Posterior cingulate gyrus (tissue), 11 donors: ENCODE measurements at regions of chr4 and their contacts with region 1.

Region 1: GRCh38 chr4:168923526-168924194 is 86.4 kb downstream of the CBR4 start:
- DNase-seq: peak in 5 of 10 donors; percentile 33 to 68 (median 35)

Region 2: DNA sequence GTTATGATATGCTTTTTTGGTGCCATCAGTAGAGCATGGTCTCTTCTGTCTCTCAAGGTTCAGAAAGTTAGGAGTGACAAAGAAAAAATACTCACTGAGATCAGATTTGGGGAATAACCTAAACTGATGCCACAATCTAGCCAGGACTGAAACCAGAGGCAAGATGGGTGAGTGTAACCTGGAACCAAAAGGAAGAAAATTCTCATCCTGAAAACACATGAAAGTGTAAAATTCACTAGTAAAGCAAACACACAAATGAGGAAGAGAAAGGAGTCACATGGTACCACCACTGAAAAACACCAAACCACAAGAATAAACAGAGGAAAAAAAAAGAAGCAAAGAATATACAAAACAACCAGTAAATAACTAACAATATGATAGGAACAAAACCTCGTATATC is 734.9 kb before region 1 on chr4:
- intact Hi-C with region 1: loop called (anchors 5 kb)
- DNase-seq: no peak

Region 3: DNA sequence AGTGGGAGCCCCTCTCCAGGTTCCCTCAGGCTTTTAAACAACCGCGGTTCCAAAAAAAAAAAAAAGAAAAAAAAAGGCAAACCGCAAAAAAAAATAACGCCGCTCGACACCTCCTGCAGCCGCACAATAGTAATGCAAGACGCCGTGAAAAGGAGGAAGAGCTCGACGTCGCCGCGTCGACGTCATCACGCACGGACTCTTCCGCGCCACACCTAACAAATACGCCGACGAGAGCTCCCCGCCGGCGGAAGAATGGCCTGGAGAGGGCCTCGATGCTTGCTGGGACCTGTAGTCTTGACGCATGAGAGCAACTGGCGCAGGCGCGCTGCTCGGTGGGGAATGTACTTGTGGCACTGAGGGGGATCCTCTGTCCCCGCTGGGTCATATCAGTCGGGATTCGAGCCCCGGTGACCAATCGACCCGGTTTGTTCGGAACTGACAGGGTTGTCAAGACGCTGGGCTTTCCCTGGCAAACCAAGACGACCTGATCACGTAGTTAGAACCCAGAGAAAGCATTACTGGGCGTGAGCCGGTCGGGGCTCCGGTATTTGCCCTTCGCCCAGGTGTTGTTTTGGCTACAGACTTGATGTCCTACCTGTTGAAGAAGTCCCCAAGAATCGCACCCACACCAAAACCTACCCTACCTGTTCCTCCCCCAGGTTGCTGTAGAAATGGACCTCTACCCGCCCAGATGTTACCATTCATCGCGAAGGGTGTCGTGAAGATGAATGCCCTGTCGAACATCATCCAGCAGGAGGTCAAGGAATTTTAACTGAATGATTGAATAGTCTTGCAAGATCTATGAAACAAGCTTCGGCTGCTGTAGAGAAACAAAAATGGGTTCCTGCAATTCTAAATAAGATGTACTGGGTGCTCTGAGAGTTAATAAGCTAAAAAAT is 86.7 kb after region 1 on chr4 and contains the start of gene CBR4:
- intact Hi-C with region 1: loop called (anchors 5 kb)
- DNase-seq: peak; percentile 96 to 100 (median 98)

Region 4: DNA sequence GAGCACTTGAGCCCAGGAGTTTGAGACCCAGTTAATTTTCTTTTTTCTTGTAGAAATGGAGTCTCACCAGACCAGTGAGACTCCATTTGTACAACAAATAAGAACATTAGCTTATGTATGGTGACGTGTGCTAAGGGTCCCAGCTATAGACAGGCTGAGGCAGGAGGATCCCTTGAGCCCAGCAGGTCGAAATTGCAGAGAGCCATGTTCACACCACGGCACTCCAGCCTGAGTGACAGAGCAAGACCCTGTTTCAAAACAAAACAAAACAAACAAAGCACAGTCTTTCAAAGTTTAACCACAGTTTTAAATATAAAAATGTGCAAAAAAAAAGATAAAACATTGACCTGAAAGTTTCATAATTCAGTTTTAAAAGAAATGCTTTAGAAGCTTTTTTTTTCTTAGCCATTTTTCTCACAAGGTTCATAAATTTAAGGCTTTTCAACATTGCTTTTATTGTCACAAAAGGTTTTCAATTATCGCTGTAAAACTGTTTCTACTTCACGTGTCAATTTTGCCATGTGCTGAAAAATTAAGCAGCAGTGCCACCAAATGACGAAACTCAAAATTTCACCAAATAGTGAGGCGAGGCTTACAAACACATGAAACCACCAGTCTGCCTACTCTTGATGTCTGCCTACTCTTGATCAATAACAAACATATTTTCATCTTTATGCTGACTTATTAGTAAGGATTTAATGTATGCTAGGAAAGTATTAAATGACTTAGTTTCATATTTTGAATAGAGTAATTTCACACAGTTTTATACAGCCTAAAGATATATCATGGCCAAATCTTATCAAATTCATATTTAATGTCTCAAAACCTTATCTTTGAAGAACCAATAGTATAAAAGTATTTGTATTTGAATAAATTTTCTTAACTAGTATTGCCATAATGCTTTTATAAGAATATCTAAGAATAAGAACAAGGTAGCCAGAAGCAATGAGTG is 562.4 kb after region 1 on chr4:
- intact Hi-C with region 1: loop called (anchors 1 kb)
- DNase-seq: peak in 4 of 10 donors; percentile 10 to 63 (median 28)

Region 5: GRCh38 chr4:169566021-169566818 is 642.6 kb after region 1 on chr4:
- intact Hi-C with region 1: loop called (anchors 2 kb)
- DNase-seq: no peak